Posterior vena cava (tissue), 2 donors: ENCODE measurements at regions of chr17 and their contacts with region 1.

Region 1: DNA sequence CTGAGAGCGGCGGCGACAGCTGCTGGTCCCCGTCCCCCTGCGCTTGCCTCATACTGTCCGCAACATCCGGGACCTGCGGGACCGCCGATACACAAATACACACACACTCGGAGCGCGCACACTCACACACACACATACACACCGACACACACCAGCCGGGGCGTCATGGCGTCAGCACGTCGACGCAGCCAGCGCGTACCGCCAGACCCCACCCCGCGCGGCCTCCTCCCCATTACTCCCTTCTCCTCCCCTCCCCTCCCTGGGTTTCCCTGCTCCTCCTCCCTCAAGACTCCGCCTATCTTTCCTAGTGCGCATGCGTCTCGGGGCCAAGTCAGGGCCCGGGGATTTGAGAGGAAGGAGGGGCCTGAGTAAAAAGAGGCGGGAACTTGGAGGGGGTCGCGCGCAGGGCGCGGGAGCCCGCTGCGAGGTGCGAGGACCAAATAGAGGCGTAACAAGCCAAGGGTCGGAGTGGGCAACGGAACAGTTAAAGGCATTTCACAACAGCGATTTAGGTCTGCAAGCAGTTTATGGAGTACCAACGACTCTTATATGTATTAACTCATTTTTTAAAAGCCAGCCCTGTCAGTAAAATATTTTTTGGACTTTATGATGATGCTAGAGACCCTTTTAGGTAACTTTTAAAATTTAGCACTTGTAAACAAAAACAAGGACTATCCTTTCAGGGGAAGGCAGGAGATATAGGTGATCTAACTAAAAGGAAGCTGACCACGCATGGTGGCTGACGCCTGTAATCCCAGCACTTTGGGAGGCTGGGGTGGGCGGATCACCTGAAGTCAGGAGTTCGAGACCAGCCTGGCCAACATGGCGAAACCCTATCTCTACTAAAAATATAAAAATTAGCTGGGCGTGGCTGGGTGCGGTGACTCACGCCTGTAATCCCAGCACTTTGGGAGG is at the start of gene SPOP:
- DNase-seq: peak; percentile 100
- total RNA-seq, gene SPOP: 117 to 130 TPM

Region 2: DNA sequence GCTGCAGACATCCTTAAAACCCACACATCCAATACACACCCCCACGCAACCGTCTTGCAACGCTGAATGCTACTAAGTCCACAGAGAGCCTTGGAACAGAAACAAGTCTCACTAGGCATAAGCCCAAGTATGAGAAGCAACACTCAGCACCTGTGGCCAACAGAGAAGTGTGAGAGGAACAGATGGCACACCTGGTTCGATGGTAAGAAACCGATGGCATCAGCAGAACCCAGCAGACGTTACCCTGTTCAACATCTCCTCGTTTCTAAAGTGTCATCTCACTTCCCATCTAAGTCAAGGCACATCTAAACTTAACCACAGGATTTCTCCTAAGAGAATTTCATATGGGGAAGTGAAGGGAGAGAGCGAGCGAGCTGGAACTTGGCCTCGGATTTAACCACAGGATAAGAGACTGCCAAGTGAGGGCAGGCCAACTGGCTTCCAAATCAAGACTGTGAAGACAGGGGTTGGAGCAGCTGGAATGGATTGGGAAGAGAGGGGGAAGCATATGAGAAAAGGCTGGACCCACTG is 61.5 kb before region 1 on chr17:
- intact Hi-C with region 1: loop called in 1 of 2 experiments (anchors 10 kb)
- DNase-seq: peak; percentile 94

Region 3: GRCh38 chr17:49637050-49637449 is 41.1 kb before region 1 on chr17:
- intact Hi-C with region 1: loop called in 1 of 2 experiments (anchors 5 kb)
- DNase-seq: no peak